Activated CD4-positive, alpha-beta memory T cell treated with anti-CD3 and anti-CD28 coated beads for 36 hours (primary cell): ENCODE measurements at regions of chr7 and their contacts with region 1.

Region 1: GRCh38 chr7:45923290-45923689 is 2.2 kb upstream of the IGFBP3 start:
- DNase-seq: peak; percentile 78
- H3K4me3 Mint-ChIP-seq: peak overlapping the region; percentile 22
- H3K27ac Mint-ChIP-seq: no peak overlapping the region
- H3K4me1 Mint-ChIP-seq: peaks cover 25% of the 10 kb centered on the region
- H3K27me3 Mint-ChIP-seq: peaks cover 41% of the 10 kb centered on the region

Region 2: DNA sequence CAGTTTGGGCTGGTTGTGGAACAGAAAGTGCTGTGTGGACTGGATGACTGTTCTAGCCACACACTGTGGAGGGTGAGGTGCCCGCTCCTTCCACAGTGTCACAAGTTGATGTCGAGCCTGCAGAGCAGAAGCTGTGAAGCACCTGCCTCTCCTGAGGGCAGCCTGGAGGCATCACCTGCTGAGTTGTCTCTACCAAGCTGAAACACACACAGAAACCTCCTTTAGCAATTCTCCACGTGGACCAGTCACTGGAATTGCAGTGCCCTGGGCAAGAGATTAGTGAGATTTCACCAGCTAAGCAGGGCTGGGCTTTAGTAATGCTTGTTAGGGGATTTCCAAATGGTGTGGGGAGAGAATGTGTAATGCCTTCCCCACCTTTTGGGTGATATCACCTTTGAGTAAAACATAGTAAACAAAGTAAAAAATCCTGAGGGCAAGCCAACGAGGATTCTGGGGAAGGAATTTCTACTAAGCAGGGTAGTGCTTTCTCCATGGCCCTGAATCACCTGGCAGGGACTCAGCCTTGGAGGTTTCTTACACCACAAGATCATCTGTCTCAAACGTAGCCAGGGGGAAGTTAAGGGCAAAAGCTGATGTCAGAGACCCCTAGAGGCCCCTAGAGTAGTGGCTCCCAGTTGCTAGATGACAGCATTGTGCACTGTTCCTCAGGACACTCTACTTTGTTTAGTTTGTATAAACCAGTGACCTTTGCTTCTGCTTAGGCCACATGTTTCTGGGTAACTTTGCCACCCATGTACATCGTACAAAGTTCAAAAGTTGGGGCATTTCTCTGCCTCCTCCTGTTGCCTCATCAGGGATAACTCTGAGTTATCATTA is 230.9 kb after region 1 on chr7:
- CTCF ChIA-PET with region 1: no interaction called
- POLR2A ChIA-PET with region 1: no interaction called
- intact Hi-C with region 1: loop called (anchors 5 kb)
- DNase-seq: peak; percentile 11
- H3K4me3 Mint-ChIP-seq: no peak overlapping the region
- H3K27ac Mint-ChIP-seq: peak overlapping the region; percentile 13
- H3K4me1 Mint-ChIP-seq: peaks cover 4% of the 10 kb centered on the region
- H3K27me3 Mint-ChIP-seq: no peaks in the 10 kb centered on the region

Region 3: DNA sequence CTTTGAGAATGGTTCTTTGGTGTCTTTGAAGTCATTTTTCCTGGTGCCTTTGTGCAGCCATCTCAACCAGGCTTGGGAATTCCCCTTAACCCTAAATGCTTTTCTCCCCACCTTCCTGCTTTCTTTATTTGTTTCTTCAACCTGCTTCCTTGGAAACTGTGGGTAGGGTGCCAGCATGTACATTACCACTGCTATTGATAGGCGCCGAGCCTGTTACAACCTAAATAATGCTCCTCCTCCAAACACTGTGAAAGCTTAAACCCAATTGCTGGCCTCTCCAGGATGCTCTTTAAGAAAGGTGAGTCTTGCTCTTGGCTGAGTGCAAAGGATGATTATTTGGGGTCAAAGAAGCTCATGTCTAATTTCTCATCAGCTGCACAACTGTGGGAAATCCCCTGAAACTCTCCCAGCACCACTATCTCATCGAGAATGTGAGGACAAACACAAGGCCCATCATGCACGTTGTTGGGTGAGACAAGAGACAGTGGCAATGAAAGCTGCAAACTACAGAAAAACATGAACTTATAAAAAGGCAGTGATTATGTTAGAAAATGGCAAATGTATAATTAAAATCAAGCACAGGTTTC is 283.3 kb after region 1 on chr7:
- CTCF ChIA-PET with region 1: no interaction called
- POLR2A ChIA-PET with region 1: no interaction called
- intact Hi-C with region 1: loop called (anchors 5 kb)
- DNase-seq: peak; percentile 11
- H3K4me3 Mint-ChIP-seq: no peak overlapping the region
- H3K27ac Mint-ChIP-seq: no peak overlapping the region
- H3K4me1 Mint-ChIP-seq: peaks cover 19% of the 10 kb centered on the region
- H3K27me3 Mint-ChIP-seq: no peaks in the 10 kb centered on the region

Region 4: GRCh38 chr7:46282155-46282554 is 358.9 kb after region 1 on chr7:
- CTCF ChIA-PET with region 1: no interaction called
- POLR2A ChIA-PET with region 1: no interaction called
- intact Hi-C with region 1: no loop called
- DNase-seq: no peak
- H3K4me3 Mint-ChIP-seq: no peak overlapping the region
- H3K27ac Mint-ChIP-seq: no peak overlapping the region
- H3K4me1 Mint-ChIP-seq: no peaks in the 10 kb centered on the region
- H3K27me3 Mint-ChIP-seq: no peaks in the 10 kb centered on the region

Region 5: DNA sequence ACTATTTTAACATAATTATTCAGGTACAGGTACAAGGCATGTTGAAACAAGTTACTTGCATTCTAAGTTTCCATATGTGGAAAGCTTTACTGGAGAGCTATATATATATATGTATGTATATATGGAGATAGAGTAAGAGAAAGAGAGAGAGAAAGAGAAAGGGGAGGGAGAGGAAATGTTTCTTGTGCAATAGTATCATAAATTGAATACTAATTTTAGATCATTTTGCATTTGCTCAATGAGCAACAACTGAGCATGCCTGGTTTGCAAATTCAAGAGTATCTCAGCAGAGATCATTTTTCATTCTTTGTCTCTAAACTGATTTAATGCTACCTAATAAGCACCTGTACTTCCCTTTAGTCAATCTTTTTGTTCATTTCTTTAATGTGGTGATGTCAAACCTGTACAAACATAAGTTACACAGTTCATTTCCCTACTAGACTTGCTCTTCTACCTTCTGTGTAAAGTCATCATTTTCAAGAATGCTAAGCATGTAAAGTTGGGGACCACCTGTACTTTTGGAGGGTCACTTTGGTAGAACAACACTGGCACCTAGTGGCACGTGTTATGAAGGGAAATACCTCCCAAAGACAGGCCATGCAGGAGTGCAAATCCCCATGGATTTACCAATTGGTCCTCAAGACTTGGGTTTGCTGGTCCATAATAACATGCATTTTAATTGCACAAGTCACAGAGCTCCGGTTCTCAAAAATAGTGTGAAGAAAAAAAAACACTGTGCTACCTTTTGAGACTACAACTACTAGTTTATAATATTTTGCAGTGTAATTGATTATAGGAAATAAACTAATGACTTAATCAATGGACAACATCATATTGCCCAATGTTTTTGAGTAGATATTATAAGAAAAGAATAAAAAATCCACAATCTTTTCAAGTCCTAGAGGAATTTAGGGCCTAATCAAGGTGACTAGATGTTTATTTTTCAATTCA is 429.0 kb after region 1 on chr7:
- CTCF ChIA-PET with region 1: interaction called, 5 read pairs
- POLR2A ChIA-PET with region 1: no interaction called
- intact Hi-C with region 1: loop called (anchors 1 kb)
- DNase-seq: peak; percentile 22
- H3K4me3 Mint-ChIP-seq: no peak overlapping the region
- H3K27ac Mint-ChIP-seq: no peak overlapping the region
- H3K4me1 Mint-ChIP-seq: no peaks in the 10 kb centered on the region
- H3K27me3 Mint-ChIP-seq: no peaks in the 10 kb centered on the region

Region 6: DNA sequence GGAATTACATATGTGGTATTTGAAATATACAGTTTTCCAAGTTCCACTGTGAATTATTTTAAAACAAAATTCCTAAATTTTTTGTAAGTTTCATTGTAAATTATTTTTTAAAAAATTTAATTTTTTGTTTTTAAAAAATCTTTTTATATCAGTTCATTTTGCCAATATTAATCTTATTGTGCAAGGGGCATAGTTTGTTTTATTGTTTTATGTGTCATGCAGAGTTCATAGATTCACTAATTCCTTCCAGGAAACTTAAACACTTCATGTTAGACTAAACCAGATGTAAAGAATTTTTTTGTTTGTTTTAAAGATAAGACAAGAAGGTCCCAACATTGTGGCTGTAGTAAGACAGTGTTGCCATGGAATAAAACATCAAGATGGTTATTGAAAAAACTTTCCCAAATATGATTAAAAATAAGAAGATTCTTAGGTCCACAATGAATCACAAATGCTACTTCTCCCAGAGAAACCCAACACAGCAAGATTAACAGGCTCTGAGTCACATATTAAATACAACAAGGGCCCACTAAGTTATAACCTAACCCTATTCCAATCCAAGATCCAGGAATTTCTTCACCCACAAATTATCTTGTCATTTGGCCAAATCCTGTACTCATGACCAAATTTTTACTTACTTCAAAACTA is 462.5 kb after region 1 on chr7:
- CTCF ChIA-PET with region 1: no interaction called
- POLR2A ChIA-PET with region 1: no interaction called
- intact Hi-C with region 1: no loop called
- DNase-seq: no peak
- H3K4me3 Mint-ChIP-seq: no peak overlapping the region
- H3K27ac Mint-ChIP-seq: no peak overlapping the region
- H3K4me1 Mint-ChIP-seq: no peaks in the 10 kb centered on the region
- H3K27me3 Mint-ChIP-seq: no peaks in the 10 kb centered on the region

Region 7: GRCh38 chr7:47088329-47089067 is 1165.2 kb after region 1 on chr7:
- CTCF ChIA-PET with region 1: interaction called, 13 read pairs
- POLR2A ChIA-PET with region 1: no interaction called
- intact Hi-C with region 1: loop called (anchors 1 kb)
- DNase-seq: peak; percentile 30
- H3K4me3 Mint-ChIP-seq: no peak overlapping the region
- H3K27ac Mint-ChIP-seq: no peak overlapping the region
- H3K4me1 Mint-ChIP-seq: no peaks in the 10 kb centered on the region
- H3K27me3 Mint-ChIP-seq: peaks cover 2% of the 10 kb centered on the region

Region 8: DNA sequence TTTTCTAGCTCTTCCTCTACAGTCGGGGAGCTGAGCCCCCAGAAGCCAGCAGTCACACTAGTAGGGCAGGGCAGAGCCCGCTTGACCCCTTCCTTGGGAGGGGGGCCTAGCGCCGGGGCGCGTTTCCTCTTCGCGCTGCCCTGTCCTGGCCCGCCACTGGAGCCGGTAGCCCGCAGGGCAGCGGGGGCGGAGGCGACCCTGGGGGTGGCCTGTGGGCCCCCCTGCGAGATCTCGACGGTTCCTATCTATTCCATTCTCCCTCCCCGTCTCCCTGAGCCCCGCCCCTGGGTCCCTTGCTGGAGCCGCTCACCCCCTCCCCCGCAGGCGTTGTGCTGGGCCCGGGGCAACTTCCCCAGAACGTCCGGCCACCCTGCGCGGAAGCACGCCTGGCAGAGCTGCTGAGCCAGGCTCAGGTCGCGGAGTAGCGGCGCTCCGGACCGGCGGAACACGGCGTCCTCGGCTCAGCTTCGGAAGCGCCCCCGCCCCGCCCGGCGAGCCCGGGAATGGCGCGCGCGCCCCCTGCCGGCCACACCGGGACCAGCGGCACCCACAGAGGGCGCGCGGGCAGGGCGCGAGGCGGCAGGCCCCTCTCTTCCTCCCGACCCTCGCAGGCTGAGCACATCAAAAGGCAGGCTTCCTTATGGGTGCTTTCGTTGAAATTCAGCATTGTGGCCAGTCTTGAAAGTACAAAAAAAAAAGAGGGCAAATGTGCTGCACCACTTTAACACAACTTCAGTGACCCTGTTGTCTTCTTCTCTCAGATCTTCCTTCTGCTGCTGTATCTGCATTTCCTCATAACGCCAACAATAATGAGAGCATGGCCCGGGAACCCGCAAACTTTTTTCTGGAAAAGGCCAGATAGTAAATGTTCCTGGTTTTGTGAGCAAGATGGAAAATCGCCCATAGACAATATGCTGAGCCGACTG is 1331.1 kb after region 1 on chr7:
- CTCF ChIA-PET with region 1: interaction called, 4 read pairs
- POLR2A ChIA-PET with region 1: no interaction called
- intact Hi-C with region 1: loop called (anchors 5 kb)
- DNase-seq: peak; percentile 49
- H3K4me3 Mint-ChIP-seq: no peak overlapping the region
- H3K27ac Mint-ChIP-seq: no peak overlapping the region
- H3K4me1 Mint-ChIP-seq: no peaks in the 10 kb centered on the region
- H3K27me3 Mint-ChIP-seq: peaks cover 31% of the 10 kb centered on the region